ENCODE measurements at regions of chr10 and their contacts with region 1.

Region 1: GRCh38 chr10:97407211-97407951 is 6.2 kb upstream of the RRP12 start:
- DNase-seq: peak; percentile 75 to 77
- H3K4me3 ChIP-seq: 0 out of 2 replicates have a peak overlapping the region, but pooled peaks have one; percentile 6
- H3K4me3 Mint-ChIP-seq: no peak overlapping the region
- H3K27ac Mint-ChIP-seq: peak overlapping the region; percentile 35
- H3K4me1 ChIP-seq: peaks cover 10% of the 10 kb centered on the region
- H3K4me1 Mint-ChIP-seq: no peaks in the 10 kb centered on the region
- H3K27me3 ChIP-seq: no peaks in the 10 kb centered on the region
- H3K27me3 Mint-ChIP-seq: no peaks in the 10 kb centered on the region
- CTCF ChIP-seq: peak; percentile 87 to 88

Region 2: DNA sequence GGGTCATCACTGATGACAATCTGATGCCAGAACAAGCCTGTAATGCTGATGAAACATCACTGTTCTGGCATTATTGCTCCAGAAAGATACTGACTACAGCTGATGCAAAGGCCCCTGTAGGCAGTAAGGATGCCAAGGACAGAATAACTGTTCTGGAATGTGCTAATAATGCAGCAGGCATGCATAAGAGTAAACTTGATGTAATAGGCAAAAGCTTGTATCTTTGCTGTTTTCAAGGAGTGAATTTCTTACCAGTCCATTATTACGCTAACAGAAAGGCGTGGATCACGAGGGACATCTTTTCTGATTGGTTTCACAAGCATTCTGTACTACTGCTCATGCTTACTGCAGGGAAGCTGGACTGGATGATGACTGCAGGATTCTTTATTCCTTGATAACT is 556.6 kb before region 1 on chr10:
- CTCF ChIA-PET with region 1: no interaction called
- POLR2A ChIA-PET with region 1: no interaction called
- intact Hi-C with region 1: no loop called
- DNase-seq: no peak
- H3K4me3 ChIP-seq: no peak overlapping the region
- H3K4me3 Mint-ChIP-seq: no peak overlapping the region
- H3K27ac Mint-ChIP-seq: no peak overlapping the region
- H3K4me1 ChIP-seq: no peaks in the 10 kb centered on the region
- H3K4me1 Mint-ChIP-seq: no peaks in the 10 kb centered on the region
- H3K27me3 ChIP-seq: no peaks in the 10 kb centered on the region
- H3K27me3 Mint-ChIP-seq: no peaks in the 10 kb centered on the region
- CTCF ChIP-seq: no peak

Region 3: DNA sequence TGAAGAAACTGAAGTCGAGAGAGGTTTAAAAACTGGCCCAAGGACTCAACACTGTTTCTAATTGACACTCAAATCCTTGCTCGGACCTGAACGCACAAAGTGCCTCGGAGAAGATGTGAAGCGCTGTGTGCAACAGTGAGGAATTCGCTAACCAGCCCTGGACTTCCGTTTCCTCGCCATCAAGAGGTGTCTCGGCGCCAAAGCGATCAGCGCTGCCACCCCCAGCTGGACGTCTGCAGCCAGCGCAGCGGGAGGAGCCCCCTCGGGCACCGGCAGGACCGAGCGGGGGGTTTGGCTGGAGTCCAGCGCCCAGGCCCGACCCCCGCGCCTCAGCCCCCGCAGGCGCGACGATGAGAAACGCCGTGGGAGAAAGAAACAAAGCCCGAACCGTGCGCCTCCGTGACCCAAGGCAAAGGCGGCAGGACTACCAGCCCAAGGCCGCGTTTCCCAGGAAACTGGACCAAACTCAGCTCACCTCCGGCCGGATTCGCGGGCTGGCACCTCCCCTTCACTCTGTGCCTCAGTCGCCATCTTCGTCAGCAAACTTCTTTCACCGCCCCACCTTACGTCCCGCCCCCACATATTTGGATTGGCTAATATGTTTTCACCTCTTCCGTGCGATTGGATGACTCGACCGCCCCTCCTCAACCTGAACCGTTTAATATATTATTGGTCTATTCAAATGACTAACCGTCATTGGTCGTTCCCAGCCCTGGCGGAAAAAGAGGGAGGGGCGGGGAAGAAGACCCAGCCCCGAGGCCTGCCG is 115.1 kb before region 1 on chr10 and contains the start of gene ARHGAP19:
- CTCF ChIA-PET with region 1: no interaction called
- POLR2A ChIA-PET with region 1: no interaction called
- intact Hi-C with region 1: no loop called
- DNase-seq: peak; percentile 97 to 98
- H3K4me3 ChIP-seq: peak within 1 kb of the TSS; percentile 97
- H3K4me3 Mint-ChIP-seq: peak within 1 kb of the TSS; percentile 94
- H3K27ac Mint-ChIP-seq: peak within 1 kb of the TSS; percentile 91
- H3K4me1 ChIP-seq: peaks cover 7% of the 10 kb centered on the region
- H3K4me1 Mint-ChIP-seq: peaks cover 6% of the 10 kb centered on the region
- H3K27me3 ChIP-seq: no peaks in the 10 kb centered on the region
- H3K27me3 Mint-ChIP-seq: no peaks in the 10 kb centered on the region
- CTCF ChIP-seq: peak in 1 of 2 experiments; percentile 42
- total RNA-seq, gene ARHGAP19: 13.9 and 15.9 TPM in 2 replicates

Region 4: DNA sequence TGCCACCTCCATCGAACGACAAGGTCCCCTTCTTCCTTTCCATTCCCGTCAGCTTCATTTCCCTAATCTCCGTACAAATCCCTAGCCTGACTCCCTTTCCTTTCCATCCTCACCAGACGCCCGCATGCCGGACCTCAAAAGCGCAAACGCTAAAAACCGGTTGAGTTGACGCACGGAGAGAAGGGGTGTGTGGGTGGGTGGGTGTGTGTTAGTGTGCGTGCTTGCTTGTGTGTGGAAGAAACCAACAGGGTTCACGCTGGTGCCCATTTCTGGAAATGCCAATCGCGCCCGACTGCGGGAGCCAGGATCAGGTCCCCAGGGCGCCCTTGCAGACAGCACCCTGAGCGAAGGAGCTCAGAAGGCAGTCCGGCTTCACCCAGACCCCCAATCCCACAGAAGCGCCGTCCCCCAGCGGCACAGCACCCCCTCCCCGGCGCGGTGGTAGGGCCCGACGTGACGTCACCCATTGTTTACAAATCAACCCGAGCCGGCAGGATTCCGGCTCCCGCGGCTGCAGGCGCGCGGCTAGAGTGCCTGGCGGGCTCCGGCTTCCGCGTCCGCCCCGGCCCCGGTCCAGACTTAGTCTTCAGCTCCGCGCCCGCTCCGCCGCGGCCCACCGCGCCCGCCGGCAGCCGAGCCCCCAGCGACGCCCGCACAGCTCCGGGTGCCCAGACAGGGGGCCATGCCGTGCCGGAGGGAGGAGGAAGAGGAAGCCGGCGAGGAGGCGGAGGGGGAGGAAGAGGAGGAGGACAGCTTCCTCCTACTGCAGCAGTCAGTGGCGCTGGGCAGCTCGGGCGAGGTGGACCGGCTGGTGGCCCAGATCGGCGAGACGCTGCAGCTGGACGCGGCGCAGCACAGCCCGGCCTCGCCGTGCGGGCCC is 88.4 kb before region 1 on chr10 and contains the start of gene FRAT1:
- CTCF ChIA-PET with region 1: no interaction called
- POLR2A ChIA-PET with region 1: no interaction called
- intact Hi-C with region 1: no loop called
- DNase-seq: peak; percentile 89 to 92
- H3K4me3 ChIP-seq: peak within 1 kb of the TSS; percentile 94
- H3K4me3 Mint-ChIP-seq: peak within 1 kb of the TSS; percentile 86
- H3K27ac Mint-ChIP-seq: peak within 1 kb of the TSS; percentile 99
- H3K4me1 ChIP-seq: peaks cover 4% of the 10 kb centered on the region
- H3K4me1 Mint-ChIP-seq: peaks cover 7% of the 10 kb centered on the region
- H3K27me3 ChIP-seq: no peaks in the 10 kb centered on the region
- H3K27me3 Mint-ChIP-seq: peaks cover 3% of the 10 kb centered on the region
- CTCF ChIP-seq: no peak
- total RNA-seq, gene FRAT1: 2.3 and 2.9 TPM in 2 replicates

Region 5: GRCh38 chr10:97425964-97426775 is 18.8 kb after region 1 on chr10 and contains the start of gene PGAM1:
- CTCF ChIA-PET with region 1: interaction called, 5 read pairs
- POLR2A ChIA-PET with region 1: no interaction called
- intact Hi-C with region 1: loop called (anchors 1 kb)
- DNase-seq: peak; percentile 94 to 98
- H3K4me3 ChIP-seq: peak within 1 kb of the TSS; percentile 83
- H3K4me3 Mint-ChIP-seq: peak within 1 kb of the TSS; percentile 75
- H3K27ac Mint-ChIP-seq: peak within 1 kb of the TSS; percentile 83
- H3K4me1 ChIP-seq: peaks cover 12% of the 10 kb centered on the region
- H3K4me1 Mint-ChIP-seq: no peaks in the 10 kb centered on the region
- H3K27me3 ChIP-seq: no peaks in the 10 kb centered on the region
- H3K27me3 Mint-ChIP-seq: no peaks in the 10 kb centered on the region
- CTCF ChIP-seq: peak; percentile 54 to 91
- total RNA-seq, gene PGAM1: 412 and 462 TPM in 2 replicates

Region 6: DNA sequence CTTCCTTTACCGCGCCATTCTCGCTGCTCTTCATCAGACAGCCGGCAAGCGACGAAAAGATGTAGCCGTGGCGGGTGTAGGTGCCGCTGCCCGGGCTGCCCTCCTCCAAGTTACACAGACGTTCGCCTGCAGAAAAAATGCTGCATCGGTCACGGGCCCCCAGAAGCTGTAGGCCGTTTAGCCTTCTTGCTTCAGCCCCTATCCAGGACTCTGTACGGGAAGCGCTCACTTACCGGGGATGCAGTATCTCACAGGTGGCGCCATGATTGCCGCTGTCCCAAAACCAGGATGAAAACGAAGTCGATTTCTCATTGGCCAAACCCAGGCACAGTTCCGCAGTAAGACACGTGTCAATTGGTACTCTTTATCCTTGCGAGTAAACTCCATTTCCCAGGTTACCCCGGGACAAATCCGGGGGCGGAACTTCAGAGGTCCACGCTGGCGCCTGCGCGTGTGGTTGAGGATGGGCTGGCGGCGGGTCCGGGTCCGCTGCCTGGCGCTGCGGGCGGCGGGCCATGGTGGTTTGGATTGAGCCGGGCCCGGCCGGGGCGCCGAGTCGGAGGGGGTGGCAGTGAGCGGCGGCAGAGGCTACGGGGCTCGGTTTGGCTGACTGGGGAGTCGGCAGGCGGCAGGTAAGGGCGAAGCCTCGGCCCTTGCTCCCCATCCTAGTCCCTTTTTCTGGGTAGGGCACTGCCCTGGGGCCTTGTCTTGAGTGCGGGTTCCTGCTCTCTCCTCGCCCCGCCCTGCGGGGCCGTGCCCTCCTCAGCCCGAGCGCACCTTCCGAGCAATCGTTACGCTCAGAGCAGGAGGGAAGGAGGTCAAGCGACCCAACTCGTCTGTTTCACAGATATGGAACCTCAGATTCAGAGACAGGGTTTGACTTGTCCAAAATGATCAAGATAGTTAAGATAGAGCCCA is 38.6 kb after region 1 on chr10 and contains the starts of genes EXOSC1 and ZDHHC16:
- CTCF ChIA-PET with region 1: interaction called, 4 read pairs
- POLR2A ChIA-PET with region 1: no interaction called
- intact Hi-C with region 1: loop called (anchors 2 kb)
- DNase-seq: peak; percentile 94 to 95
- H3K4me3 ChIP-seq: peak within 1 kb of the TSS; percentile 94
- H3K4me3 Mint-ChIP-seq: peak within 1 kb of the TSS; percentile 94
- H3K27ac Mint-ChIP-seq: peak within 1 kb of the TSS; percentile 85
- H3K4me1 ChIP-seq: peaks cover 6% of the 10 kb centered on the region
- H3K4me1 Mint-ChIP-seq: no peaks in the 10 kb centered on the region
- H3K27me3 ChIP-seq: no peaks in the 10 kb centered on the region
- H3K27me3 Mint-ChIP-seq: no peaks in the 10 kb centered on the region
- CTCF ChIP-seq: peak in 1 of 2 experiments; percentile 31
- total RNA-seq, gene EXOSC1: 77.5 and 84.7 TPM in 2 replicates
- total RNA-seq, gene ZDHHC16: 43.5 and 48.3 TPM in 2 replicates

Region 7: DNA sequence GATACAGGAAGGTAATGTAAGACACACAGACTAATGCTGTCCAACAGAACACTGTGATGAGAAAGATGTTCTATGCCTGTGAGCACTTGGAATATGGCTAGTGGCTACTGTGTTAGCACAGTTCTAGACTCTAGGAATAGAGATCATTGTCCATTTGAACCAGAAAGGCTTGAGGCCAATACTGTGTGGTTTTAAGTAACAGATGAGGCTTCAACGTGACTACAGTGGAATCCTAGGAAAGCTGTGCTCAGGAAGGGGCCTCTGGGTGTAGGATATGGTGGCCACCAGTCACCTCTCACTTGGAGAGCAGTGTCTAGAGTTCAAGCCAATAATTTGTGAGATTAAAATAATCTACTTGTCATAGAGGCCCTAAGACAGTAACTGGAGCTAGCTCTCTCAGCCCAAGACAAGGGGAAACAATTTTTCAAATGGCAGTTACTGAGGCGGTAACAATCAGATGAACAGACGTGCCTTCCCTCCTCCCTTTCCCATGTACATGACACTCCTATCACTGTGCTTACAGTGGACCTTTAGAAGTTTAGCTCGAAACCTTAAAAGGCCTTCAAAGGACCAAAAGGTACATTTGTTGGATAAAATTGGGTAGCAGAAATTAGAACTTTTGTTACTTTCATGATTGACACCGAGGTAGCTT is 48.8 kb after region 1 on chr10:
- CTCF ChIA-PET with region 1: no interaction called
- POLR2A ChIA-PET with region 1: no interaction called
- intact Hi-C with region 1: no loop called
- DNase-seq: no peak
- H3K4me3 ChIP-seq: no peak overlapping the region
- H3K4me3 Mint-ChIP-seq: no peak overlapping the region
- H3K27ac Mint-ChIP-seq: peak overlapping the region; percentile 39
- H3K4me1 ChIP-seq: no peaks in the 10 kb centered on the region
- H3K4me1 Mint-ChIP-seq: no peaks in the 10 kb centered on the region
- H3K27me3 ChIP-seq: no peaks in the 10 kb centered on the region
- H3K27me3 Mint-ChIP-seq: no peaks in the 10 kb centered on the region
- CTCF ChIP-seq: no peak

Region 8: GRCh38 chr10:97553575-97554031 is 146.2 kb after region 1 on chr10:
- CTCF ChIA-PET with region 1: no interaction called
- POLR2A ChIA-PET with region 1: no interaction called
- intact Hi-C with region 1: loop called (anchors 1 kb)
- DNase-seq: peak; percentile 70 to 74
- H3K4me3 ChIP-seq: no peak overlapping the region
- H3K4me3 Mint-ChIP-seq: no peak overlapping the region
- H3K27ac Mint-ChIP-seq: no peak overlapping the region
- H3K4me1 ChIP-seq: peaks cover 6% of the 10 kb centered on the region; the same call in 1 of the 2 replicates
- H3K4me1 Mint-ChIP-seq: peaks cover 12% of the 10 kb centered on the region
- H3K27me3 ChIP-seq: no peaks in the 10 kb centered on the region
- H3K27me3 Mint-ChIP-seq: no peaks in the 10 kb centered on the region
- CTCF ChIP-seq: peak; percentile 72 to 94

Region 9: GRCh38 chr10:97612386-97612785 is 205.0 kb after region 1 on chr10:
- CTCF ChIA-PET with region 1: no interaction called
- POLR2A ChIA-PET with region 1: no interaction called
- intact Hi-C with region 1: loop called (anchors 1 kb)
- DNase-seq: peak in 1 of 2 experiments; percentile 55
- H3K4me3 ChIP-seq: no peak overlapping the region
- H3K4me3 Mint-ChIP-seq: no peak overlapping the region
- H3K27ac Mint-ChIP-seq: no peak overlapping the region
- H3K4me1 ChIP-seq: no peaks in the 10 kb centered on the region
- H3K4me1 Mint-ChIP-seq: no peaks in the 10 kb centered on the region
- H3K27me3 ChIP-seq: no peaks in the 10 kb centered on the region
- H3K27me3 Mint-ChIP-seq: no peaks in the 10 kb centered on the region
- CTCF ChIP-seq: peak; percentile 44 to 52

Measured in Caco-2 (cell line).